ENCODE measurements at regions of chr1 and their contacts with region 1.

Region 1: DNA sequence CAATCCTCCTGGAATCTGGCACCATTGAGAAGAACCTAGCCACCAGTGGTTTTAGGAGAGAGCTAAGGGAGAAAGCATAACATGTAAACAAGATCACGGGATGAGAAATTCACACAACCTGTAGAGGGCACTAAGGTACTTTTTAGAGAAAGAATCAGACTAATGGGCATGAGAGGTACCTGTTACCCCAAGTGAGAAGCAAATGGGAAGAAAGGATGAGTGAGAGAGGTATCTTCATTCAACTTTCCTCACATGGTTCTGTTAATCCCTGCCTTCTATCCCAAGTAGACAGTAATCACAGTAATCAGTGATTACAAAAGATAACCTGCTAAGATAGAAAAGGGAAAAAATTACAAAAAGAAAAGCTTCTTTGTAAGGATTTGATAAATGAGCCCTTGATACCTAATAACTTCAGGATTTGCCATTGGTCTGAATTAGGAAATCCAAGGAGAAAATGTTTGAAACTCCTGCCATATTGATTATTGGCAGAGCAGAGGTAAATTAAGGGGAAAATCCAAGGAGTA is 251.1 kb upstream of the ADGRL2 start:
- DNase-seq: no peak
- ATAC-seq: peak; percentile 60

Region 2: DNA sequence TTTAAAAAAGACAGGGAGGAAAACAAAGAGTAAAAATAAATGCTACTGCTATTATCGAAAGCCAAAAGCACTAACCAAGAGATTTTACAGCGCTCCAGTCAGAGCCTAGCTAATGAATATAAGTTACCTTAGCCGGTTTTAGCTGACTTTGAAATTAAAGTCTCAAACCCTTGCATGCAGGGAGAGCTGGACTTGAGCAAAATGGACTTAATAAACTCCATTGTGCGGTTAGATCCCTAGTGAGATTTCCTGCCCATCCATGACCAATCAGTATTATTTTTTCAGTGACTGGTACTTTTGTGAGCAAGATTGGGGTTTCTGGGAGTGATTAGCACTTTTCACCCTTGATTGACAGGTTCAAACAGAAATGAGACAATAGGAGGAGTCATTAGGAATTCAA is 82.3 kb before region 1 on chr1:
- intact Hi-C with region 1: no loop called
- DNase-seq: no peak
- ATAC-seq: no peak

Region 3: GRCh38 chr1:81660286-81660685 is 110.6 kb after region 1 on chr1:
- intact Hi-C with region 1: no loop called
- DNase-seq: no peak
- ATAC-seq: no peak

Region 4: GRCh38 chr1:81949433-81949832 is 399.8 kb after region 1 on chr1:
- intact Hi-C with region 1: loop called (anchors 10 kb)
- DNase-seq: no peak
- ATAC-seq: no peak

Measured in Right ventricle myocardium inferior (tissue), 1 donor.